ENCODE measurements at regions of chr1 and their contacts with region 1.

Region 1: DNA sequence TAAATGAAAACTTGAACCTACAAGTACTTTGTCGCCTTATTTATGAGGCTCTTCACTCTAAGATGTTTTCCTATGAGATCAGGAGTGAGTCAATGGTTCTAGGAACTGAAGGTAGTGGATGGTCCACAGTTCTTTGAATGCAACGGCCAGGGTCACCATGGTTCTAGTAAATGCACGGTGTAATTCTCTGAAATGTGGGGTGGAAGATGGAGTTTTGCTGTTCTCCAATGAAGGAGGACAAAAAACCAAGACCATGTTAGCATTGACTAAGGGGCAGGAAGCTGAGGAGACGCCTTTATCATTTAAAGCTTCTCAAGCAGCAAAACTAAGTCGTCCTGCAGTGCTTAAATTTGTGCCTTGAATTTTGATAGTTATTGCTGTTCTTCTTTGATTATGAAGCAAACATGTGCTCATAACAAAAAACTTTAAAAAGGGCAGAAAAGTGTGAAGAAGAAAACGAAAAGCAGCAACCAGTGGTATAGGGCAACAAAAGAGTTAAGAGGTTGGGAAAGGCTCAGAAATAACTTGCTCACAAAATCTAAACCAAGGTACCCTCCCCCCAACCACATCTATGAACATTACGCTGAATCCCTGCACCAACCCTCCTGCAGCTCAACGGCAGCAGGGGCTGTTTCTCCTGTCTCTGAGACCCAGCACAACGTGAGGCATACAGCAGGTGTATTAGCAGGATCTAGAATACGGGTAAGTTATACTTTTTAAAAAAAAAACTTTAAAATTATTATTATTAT is 85.0 kb downstream of the MRPL37 start:
- DNase-seq: no peak
- ATAC-seq: no peak
- H3K4me3 ChIP-seq: no peak overlapping the region
- H3K27ac ChIP-seq: no peak overlapping the region
- H3K4me1 ChIP-seq: peaks cover 37% of the 10 kb centered on the region
- H3K27me3 ChIP-seq: no peaks in the 10 kb centered on the region
- CTCF ChIP-seq: no peak
- EP300 ChIP-seq: no peak
- POLR2A ChIP-seq: no peak
- RAD21 ChIP-seq: no peak

Region 2: DNA sequence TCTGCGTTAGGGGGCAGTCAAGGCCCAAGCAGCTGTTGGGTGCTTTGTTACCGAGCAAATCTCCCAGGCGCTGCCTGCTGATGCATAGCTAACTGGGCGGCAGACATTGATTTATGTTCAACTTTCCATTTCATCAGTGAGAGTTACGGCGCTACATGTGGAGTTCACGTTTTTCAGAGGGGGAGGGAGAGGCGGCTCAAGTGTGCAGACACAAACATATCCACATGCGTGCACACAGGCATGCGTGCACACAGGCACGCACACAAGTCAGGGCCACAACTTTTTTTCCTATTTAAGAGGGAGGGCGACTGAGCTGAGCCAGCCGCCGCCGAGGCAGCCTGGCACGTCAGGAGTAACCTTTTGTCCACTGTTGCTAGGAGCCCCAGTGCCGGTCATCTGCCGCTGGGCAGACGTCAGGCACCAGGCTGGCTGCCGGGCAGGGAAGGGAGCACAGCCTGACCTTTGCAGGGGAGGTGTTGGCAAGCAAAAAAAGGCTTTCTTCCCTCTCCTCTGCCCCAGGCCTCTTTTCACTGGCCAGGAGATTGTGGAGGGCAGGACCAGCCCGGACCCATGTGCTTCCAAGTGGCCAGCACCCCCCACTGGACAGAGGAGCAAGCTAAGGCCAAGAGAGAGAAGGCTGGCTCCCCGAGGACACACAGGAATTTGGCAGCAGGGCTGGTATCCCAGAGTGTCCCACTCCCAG is 11.7 kb before region 1 on chr1:
- CTCF ChIA-PET with region 1: no interaction called
- POLR2A ChIA-PET with region 1: no interaction called
- in situ Hi-C with region 1: no loop called
- intact Hi-C with region 1: loop called (anchors 1 kb)
- DNase-seq: no peak
- ATAC-seq: no peak
- H3K4me3 ChIP-seq: no peak overlapping the region
- H3K27ac ChIP-seq: no peak overlapping the region
- H3K4me1 ChIP-seq: peaks cover 31% of the 10 kb centered on the region
- H3K27me3 ChIP-seq: no peaks in the 10 kb centered on the region
- CTCF ChIP-seq: 0 out of 2 replicates have a peak, but pooled peaks have one; percentile 8
- EP300 ChIP-seq: no peak
- POLR2A ChIP-seq: no peak
- RAD21 ChIP-seq: no peak

Measured in HepG2 (cell line).